Activated CD8-positive, alpha-beta T cell treated with anti-CD3 and anti-CD28 coated beads, Interleukin-2, amount 10 ng/mL, durations not matched to agents 7 days and 5 days (primary cell): ENCODE measurements at regions of chr15 and their contacts with region 1.

Region 1: GRCh38 chr15:85044251-85044853 is 62.7 kb downstream of the PDE8A start:
- DNase-seq: peak; percentile 59
- ATAC-seq: peak; percentile 40
- H3K4me3 Mint-ChIP-seq: no peak overlapping the region
- H3K27ac Mint-ChIP-seq: no peak overlapping the region
- H3K4me1 Mint-ChIP-seq: peaks cover 35% of the 10 kb centered on the region
- H3K27me3 Mint-ChIP-seq: no peaks in the 10 kb centered on the region

Region 2: GRCh38 chr15:84588053-84588874 is 456.1 kb before region 1 on chr15:
- CTCF ChIA-PET with region 1: interaction called, 13 read pairs
- POLR2A ChIA-PET with region 1: no interaction called
- DNase-seq: peak; percentile 91
- ATAC-seq: peak; percentile 100
- H3K4me3 Mint-ChIP-seq: peak overlapping the region; percentile 59
- H3K27ac Mint-ChIP-seq: no peak overlapping the region
- H3K4me1 Mint-ChIP-seq: peaks cover 5% of the 10 kb centered on the region
- H3K27me3 Mint-ChIP-seq: peaks cover 14% of the 10 kb centered on the region

Region 3: DNA sequence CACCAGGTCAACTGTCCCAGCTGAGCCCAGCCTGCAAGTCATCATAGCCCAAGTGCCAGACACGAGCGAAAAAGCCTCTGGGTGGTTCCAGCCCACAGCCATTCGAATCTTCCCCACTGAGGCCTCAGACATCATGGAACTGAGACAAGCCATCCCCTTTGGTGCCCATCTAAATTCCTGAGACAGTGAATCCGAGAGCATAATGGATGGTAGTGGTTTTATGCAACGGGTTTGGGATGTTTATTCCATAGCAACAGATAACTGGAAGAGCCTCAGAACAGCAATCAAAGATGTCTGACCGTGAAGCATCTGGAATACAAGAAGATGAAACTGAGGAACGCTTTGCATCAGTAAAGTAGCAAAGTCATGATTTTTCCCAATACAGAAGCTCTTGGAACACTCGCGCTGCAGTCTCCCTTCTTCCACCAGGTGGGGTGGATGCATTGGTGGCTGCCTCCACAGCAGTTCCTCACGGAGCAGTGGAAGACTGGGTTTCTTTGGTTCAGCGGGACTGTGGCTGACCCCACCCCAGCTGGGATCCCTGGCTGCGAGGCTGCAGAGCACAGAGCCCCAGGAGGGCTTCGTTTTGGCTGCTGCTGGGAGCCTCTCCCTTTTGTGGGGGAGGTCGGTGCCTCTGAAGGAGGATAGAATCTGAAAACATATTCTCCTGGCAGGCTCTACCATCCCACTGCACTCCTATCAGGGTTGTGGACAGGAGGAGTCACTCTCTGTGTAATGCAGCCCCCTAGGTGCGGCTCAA is 89.1 kb before region 1 on chr15:
- CTCF ChIA-PET with region 1: interaction called, 17 read pairs
- POLR2A ChIA-PET with region 1: no interaction called
- DNase-seq: peak; percentile 31
- ATAC-seq: no peak
- H3K4me3 Mint-ChIP-seq: no peak overlapping the region
- H3K27ac Mint-ChIP-seq: no peak overlapping the region
- H3K4me1 Mint-ChIP-seq: peaks cover 7% of the 10 kb centered on the region
- H3K27me3 Mint-ChIP-seq: peaks cover 31% of the 10 kb centered on the region

Region 4: GRCh38 chr15:84981054-84981710 is 63.2 kb before region 1 on chr15:
- CTCF ChIA-PET with region 1: interaction called, 10 read pairs
- POLR2A ChIA-PET with region 1: interaction called, 5 read pairs
- DNase-seq: peak; percentile 96
- ATAC-seq: peak; percentile 83
- H3K4me3 Mint-ChIP-seq: peak overlapping the region; percentile 87
- H3K27ac Mint-ChIP-seq: peak overlapping the region; percentile 95
- H3K4me1 Mint-ChIP-seq: peaks cover 44% of the 10 kb centered on the region
- H3K27me3 Mint-ChIP-seq: peaks cover 4% of the 10 kb centered on the region

Region 5: GRCh38 chr15:84987949-84988624 is 56.3 kb before region 1 on chr15:
- CTCF ChIA-PET with region 1: interaction called, 16 read pairs
- POLR2A ChIA-PET with region 1: no interaction called
- DNase-seq: no peak
- ATAC-seq: no peak
- H3K4me3 Mint-ChIP-seq: peak overlapping the region; percentile 26
- H3K27ac Mint-ChIP-seq: peak overlapping the region; percentile 89
- H3K4me1 Mint-ChIP-seq: peaks cover 67% of the 10 kb centered on the region
- H3K27me3 Mint-ChIP-seq: peaks cover 2% of the 10 kb centered on the region

Region 6: GRCh38 chr15:85030301-85031049 is 13.9 kb before region 1 on chr15:
- CTCF ChIA-PET with region 1: interaction called, 14 read pairs
- POLR2A ChIA-PET with region 1: no interaction called
- DNase-seq: no peak
- ATAC-seq: peak; percentile 59
- H3K4me3 Mint-ChIP-seq: no peak overlapping the region
- H3K27ac Mint-ChIP-seq: peak overlapping the region; percentile 43
- H3K4me1 Mint-ChIP-seq: peaks cover 52% of the 10 kb centered on the region
- H3K27me3 Mint-ChIP-seq: no peaks in the 10 kb centered on the region

Region 7: DNA sequence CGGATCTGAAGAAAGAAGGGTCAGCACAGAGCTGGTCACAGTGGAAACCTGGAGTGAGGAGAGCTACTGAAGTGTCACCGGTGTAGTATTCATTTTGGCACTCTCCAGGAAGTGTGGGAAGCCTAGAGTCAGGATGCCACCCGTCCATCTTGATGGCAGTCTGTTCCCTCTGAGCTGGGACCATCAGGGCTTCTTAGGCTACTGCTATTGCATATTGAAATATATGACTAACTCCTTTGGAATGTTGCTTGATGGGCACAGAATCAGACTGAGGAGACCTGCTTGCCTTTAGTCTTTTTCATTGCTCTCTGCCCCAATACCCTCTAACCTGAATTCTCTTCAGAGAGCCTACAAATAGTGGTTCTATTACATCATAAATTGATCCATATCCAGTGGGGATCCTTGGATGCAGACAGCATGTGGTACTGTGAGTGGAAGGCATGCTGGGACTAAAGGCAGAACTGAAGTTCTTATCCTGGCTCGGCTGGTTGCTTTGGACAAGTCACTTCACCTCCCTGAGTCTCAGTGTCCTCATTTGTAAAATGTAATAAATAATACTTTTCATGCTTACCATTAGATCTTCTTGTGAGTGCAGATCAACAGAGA is 80.8 kb after region 1 on chr15:
- CTCF ChIA-PET with region 1: no interaction called
- POLR2A ChIA-PET with region 1: no interaction called
- DNase-seq: no peak
- ATAC-seq: no peak
- H3K4me3 Mint-ChIP-seq: no peak overlapping the region
- H3K27ac Mint-ChIP-seq: no peak overlapping the region
- H3K4me1 Mint-ChIP-seq: peaks cover 7% of the 10 kb centered on the region
- H3K27me3 Mint-ChIP-seq: no peaks in the 10 kb centered on the region